ENCODE measurements at regions of chr16 and their contacts with region 1.

Region 1: GRCh38 chr16:22077700-22078313 is 14.5 kb upstream of the VWA3A start:
- DNase-seq: peak; percentile 82
- H3K4me3 Mint-ChIP-seq: no peak overlapping the region
- H3K27ac Mint-ChIP-seq: no peak overlapping the region
- H3K4me1 Mint-ChIP-seq: no peaks in the 10 kb centered on the region
- H3K27me3 Mint-ChIP-seq: no peaks in the 10 kb centered on the region

Region 2: DNA sequence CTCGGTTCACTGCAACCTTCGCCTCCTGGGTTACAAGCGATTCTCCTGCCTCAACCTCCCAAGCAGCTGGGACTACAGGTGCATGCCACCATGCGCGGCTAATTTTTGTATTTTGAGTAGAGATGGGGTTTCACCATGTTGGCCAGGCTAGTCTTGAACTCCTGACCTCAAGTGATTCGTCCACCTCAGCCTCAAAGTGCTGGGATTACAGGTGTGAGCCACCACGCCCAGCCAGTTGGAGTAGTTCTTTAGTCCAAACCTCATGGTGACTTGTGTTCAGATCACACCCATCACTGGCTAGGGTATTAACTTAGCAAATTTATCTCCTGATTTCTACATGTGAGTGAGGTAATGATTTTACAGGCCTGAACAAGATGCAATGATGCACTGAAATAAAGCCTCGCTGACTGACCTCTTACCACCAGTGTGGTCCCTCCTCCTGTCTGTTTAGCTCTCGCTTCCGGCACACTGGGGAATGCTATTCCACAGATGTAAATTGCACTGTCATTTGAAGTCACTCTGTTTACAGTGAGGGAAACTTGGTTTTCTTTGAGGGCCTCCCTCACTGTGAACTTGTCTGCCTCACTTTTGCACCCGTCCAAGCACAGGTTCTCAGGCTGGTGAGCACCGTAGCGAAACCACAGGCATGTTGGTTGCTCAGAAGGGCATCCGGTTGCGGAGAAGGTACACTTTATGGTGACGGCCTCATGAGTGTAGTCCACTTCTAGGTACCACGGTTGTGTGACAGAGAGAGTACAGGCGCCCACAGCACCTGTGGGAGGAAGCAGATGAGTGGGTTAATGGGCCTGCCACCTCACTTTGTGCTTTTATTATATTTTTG is 430.9 kb before region 1 on chr16:
- CTCF ChIA-PET with region 1: no interaction called
- DNase-seq: peak; percentile 88
- H3K4me3 Mint-ChIP-seq: peak overlapping the region; percentile 73
- H3K27ac Mint-ChIP-seq: peak overlapping the region; percentile 95
- H3K4me1 Mint-ChIP-seq: peaks cover 60% of the 10 kb centered on the region
- H3K27me3 Mint-ChIP-seq: no peaks in the 10 kb centered on the region

Region 3: GRCh38 chr16:21952793-21953540 is 124.8 kb before region 1 on chr16 and contains the start of gene UQCRC2:
- CTCF ChIA-PET with region 1: interaction called, 17 read pairs
- DNase-seq: peak; percentile 91
- H3K4me3 Mint-ChIP-seq: peak within 1 kb of the TSS; percentile 99
- H3K27ac Mint-ChIP-seq: peak within 1 kb of the TSS; percentile 97
- H3K4me1 Mint-ChIP-seq: peaks cover 67% of the 10 kb centered on the region
- H3K27me3 Mint-ChIP-seq: no peaks in the 10 kb centered on the region

Region 4: DNA sequence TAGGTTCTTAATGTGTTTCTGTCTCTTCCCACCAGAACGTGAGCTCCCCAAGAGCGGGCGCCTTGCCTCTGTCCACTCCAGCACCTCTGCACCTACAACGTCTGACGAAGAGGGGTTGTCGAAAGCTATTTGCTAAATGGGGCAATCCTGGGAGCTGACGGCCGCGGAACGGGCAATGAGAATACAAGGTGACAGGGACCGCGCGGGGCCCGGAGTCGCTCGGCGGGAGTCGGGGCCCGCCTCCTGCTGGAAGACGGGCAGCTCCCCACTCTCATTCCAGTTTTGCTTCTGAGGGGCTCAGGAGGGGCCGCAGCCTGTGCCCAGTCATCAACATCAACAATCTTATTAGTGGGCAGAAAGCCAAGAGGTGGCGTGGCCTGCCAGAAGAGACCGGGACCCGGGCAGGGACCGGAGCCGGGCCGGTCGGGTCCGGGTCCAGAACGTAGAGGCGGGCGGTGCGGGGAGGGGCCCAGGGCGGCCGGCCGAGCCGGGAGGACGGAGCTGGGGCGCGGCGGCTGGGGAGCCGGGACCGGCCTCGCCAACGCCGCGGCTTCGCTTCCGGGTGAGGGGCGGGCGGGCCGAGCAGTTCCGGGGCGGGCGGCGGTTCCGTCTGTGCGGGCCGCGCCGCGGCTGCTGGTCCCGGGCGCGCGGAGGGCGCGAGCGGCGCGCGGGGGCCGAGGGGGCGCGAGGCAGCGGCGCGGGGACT is 70.1 kb before region 1 on chr16 and contains the start of gene MOSMO:
- CTCF ChIA-PET with region 1: interaction called, 215 read pairs
- DNase-seq: peak; percentile 78
- H3K4me3 Mint-ChIP-seq: peak within 1 kb of the TSS; percentile 85
- H3K27ac Mint-ChIP-seq: peak within 1 kb of the TSS; percentile 83
- H3K4me1 Mint-ChIP-seq: peaks cover 26% of the 10 kb centered on the region
- H3K27me3 Mint-ChIP-seq: peaks cover 41% of the 10 kb centered on the region

Region 5: DNA sequence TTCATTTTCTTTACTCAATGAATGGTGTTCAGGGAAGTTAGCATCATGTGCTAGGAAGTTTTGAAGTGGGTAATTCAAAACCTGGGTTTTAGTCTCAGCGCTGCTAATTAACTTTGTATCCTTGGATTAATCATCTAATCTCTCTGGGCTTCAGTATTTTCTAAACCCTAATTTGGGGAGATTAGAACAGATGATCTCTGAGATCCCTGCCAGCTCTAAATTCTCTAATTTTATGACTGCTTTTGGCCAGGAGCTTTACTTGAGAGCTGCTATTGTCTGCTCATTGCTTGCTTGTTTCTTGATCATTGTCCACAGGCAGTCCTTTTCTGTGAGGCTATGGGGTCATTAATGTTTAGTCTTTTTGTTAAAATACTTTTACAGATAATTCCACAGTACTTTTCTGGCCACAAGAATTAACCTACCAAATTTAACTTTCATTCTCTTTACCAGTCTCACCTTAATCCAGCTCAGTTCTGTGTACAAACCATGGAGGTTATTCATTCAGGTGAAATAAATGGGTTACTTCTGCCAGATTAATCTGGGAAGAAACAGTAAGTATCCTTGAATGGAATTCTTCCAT is 13.8 kb before region 1 on chr16:
- CTCF ChIA-PET with region 1: interaction called, 29 read pairs
- DNase-seq: no peak
- H3K4me3 Mint-ChIP-seq: no peak overlapping the region
- H3K27ac Mint-ChIP-seq: no peak overlapping the region
- H3K4me1 Mint-ChIP-seq: no peaks in the 10 kb centered on the region
- H3K27me3 Mint-ChIP-seq: no peaks in the 10 kb centered on the region

Region 6: GRCh38 chr16:22098405-22099255 is 20.8 kb after region 1 on chr16:
- CTCF ChIA-PET with region 1: interaction called, 29 read pairs
- DNase-seq: no peak
- H3K4me3 Mint-ChIP-seq: no peak overlapping the region
- H3K27ac Mint-ChIP-seq: no peak overlapping the region
- H3K4me1 Mint-ChIP-seq: no peaks in the 10 kb centered on the region
- H3K27me3 Mint-ChIP-seq: peaks cover 42% of the 10 kb centered on the region

Region 7: DNA sequence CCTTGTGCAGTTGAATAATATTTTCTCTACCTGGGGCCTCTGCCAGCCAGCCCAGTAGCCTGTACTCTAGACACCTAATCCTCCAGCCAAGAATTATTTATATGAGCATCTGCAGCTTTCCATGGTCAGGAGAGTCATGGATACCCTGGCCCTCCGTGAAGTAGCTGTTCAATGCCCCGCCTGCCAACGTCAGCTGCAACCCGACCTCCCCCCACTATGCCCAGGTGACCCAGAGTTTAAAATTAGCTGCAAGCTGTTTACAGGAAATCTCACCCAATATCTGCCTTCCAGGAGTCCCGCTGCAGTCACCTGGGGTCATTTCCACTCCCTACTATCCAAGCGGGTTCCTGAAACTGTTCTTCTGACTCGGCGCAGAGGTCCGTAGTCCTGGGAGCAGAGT is 96.8 kb after region 1 on chr16:
- CTCF ChIA-PET with region 1: no interaction called
- DNase-seq: no peak
- H3K4me3 Mint-ChIP-seq: no peak overlapping the region
- H3K27ac Mint-ChIP-seq: no peak overlapping the region
- H3K4me1 Mint-ChIP-seq: no peaks in the 10 kb centered on the region
- H3K27me3 Mint-ChIP-seq: peaks cover 15% of the 10 kb centered on the region

Region 8: DNA sequence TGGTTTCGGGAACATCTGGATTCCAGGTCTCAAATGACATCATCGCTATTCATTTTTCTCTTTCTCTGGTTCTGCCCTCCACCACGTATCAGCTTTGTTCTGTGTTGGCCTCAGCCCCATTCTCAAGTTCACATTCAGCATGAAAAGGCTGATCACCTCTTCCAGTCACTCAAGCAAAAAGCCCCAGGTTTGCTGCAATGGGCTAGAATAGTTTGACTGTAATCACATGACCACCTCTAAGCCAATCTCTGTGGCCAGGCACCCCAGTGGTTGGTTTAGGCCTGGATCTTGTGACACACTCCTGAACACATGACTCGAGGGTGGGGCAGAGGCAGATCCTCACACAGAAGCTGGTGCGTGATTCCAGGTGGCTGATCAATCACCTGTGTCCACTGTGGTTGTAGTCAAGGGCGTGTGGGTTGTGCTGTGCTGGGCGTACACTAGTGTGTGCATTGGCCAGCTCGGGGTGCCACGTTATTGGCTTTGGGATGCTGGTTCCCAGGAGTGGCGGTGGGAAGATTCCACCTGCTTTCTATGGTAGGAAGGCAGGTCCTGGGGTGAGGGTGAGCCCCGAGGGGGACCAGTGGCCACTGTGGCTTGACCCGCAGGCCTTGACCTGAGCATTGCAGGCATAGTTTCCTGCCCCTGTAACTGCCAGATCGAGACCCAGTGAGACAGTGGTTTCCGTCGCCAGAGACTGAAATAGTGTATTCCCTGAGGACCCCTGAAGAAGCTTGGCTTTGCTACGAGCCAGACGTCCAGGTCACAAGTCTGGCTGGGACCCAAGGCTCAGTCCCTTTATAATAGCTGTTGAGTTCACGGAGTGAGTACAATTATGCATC is 140.3 kb after region 1 on chr16:
- CTCF ChIA-PET with region 1: no interaction called
- DNase-seq: peak; percentile 36
- H3K4me3 Mint-ChIP-seq: no peak overlapping the region
- H3K27ac Mint-ChIP-seq: peak overlapping the region; percentile 15
- H3K4me1 Mint-ChIP-seq: peaks cover 10% of the 10 kb centered on the region
- H3K27me3 Mint-ChIP-seq: no peaks in the 10 kb centered on the region

Measured in activated naive CD4-positive, alpha-beta T cell treated with anti-CD3 and anti-CD28 coated beads, Interleukin-2, amount 10 ng/mL, durations not matched to agents 7 days and 5 days (primary cell).